H1 (cell line): ENCODE measurements at regions of chr16 and their contacts with region 1.

Region 1: DNA sequence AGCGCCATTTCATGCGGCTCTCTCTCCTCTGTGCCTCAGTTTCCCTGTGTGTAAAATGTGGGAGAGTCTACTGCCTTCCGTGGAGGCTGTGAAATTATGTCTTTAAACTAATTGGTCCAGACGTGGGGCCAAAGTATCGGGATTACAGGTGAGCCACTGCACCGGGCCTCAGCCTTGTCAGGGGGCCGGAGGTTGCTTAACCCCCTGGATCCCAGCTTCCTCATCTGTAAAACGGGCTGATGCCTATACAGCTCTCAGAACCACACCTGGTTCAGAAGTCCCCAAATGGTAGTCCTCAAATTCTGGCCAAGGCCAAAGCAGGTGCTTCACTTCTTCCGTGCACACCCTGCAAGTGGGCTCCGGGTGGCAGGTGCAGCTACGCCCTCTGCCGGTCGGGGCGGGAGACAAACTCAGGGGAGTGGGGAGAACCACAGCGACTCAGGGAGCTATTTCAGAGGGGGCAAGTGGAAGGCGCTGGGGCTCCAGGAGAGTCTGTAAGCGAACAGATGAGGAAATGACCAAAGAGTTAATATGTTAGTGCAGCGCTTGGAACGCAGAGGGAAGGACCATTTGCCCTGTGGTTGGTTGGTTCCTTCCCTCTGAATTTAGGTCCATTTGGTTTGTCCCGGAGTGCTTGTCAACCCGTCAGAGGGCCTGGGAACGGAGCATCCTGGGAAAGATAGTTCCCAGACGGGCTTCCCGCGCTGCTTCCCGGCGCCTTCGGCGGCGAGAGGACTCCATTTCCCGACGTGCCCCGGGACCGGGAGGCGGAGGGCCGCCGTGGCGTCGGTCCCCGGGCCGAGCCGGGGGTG is at the start of gene MGRN1:
- DNase-seq: peak; percentile 82 to 94
- H3K4me3 ChIP-seq: peak within 1 kb of the TSS; percentile 72 to 97 (median 78)
- H3K27ac ChIP-seq: peak within 1 kb of the TSS; percentile 98
- H3K4me1 ChIP-seq: peaks cover 0 to 7% (median 6%) of the 10 kb centered on the region in 4 experiments; a peak in 6 of 7 replicates
- H3K27me3 ChIP-seq: no peaks in the 10 kb centered on the region
- CTCF ChIP-seq: peak; percentile 89 to 99 (median 98)
- EP300 ChIP-seq: peak in 1 of 2 experiments; percentile 97; a peak in 2 of 3 replicates
- POLR2A ChIP-seq: no peak; a peak in 1 of 3 replicates
- RAD21 ChIP-seq: peak; percentile 68 to 77
- total RNA-seq, gene MGRN1: 79.4 and 82.3 TPM in 2 replicates

Region 2: DNA sequence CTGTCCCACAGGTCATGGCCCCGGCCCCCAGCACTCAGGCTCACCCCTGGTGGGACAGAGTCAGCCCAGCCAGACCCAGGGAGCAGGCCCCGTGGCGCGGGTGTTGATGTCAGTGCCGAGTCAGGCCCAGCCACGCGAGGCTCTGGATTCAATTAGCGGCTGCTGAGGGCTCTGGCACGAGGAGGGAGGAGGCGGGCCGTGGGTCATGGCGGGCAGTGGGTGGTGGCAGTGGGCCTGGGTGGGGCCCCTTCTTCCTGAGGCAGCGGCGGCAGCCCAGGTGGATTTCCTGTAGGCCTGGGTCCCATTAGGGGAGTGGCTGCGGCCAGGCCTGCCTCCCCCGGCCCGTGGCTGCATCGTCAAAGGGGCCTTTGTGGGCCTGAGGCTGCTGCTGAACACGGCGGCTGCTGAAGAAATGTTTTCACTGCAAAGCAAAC is 239.7 kb before region 1 on chr16:
- CTCF ChIA-PET with region 1: no interaction called
- POLR2A ChIA-PET with region 1: no interaction called
- DNase-seq: no peak
- H3K4me3 ChIP-seq: no peak overlapping the region
- H3K27ac ChIP-seq: no peak overlapping the region
- H3K4me1 ChIP-seq: peaks cover 0 to 15% (median 11%) of the 10 kb centered on the region in 4 experiments; a peak in 6 of 7 replicates
- H3K27me3 ChIP-seq: no peaks in the 10 kb centered on the region
- CTCF ChIP-seq: no peak
- EP300 ChIP-seq: no peak
- POLR2A ChIP-seq: 0 out of 3 replicates have a peak, but pooled peaks of 1 of the 2 experiments have one; percentile 8
- RAD21 ChIP-seq: no peak

Region 3: DNA sequence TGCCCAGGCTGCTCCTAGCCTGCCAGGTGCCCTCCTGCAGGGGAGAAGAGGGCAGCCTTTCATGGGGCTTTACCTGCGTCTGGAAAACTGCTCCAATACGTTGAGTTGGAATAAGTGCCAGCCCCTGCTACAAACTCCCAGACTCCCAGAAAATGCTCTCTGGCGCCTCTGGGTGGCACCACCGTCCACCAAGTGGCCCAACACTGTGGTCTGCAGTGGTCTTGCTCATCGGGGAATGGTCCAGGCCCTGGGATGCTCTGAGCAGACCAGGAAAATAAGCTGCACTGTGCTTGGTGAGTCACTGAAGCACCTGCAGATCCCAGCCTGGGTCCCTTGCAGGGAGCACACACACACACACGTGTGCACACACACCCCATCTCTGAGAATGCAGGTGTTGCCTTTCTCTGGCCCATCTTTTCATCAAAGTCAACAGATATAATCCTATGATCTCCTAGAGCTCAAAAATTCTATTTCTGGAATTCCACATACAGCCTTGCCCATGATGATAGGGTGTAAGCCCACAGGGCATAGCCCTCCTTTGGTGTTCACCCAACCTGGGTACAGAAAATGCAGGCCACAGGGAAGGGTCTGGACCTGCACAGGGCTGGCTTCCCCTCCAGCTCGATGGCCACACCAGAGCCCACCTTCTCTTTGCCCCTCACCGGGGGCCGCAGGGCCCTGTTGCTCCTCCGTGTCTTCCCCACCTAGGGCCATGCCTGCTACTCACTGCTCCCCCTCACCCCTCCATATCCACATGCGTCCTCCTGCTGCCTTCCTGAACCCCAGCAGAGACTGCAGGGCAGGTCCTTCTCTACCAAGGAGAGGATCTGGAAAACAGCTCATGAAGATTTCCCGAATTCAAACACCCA is 106.2 kb before region 1 on chr16:
- CTCF ChIA-PET with region 1: interaction called, 22 read pairs
- POLR2A ChIA-PET with region 1: no interaction called
- DNase-seq: peak in 1 of 2 experiments; percentile 79
- H3K4me3 ChIP-seq: no peak overlapping the region
- H3K27ac ChIP-seq: no peak overlapping the region; the same call in 1 of the 2 replicates
- H3K4me1 ChIP-seq: peaks cover 0 to 18% (median 13%) of the 10 kb centered on the region in 4 experiments; a peak in 6 of 7 replicates
- H3K27me3 ChIP-seq: no peaks in the 10 kb centered on the region
- CTCF ChIP-seq: peak; percentile 91 to 97 (median 94)
- EP300 ChIP-seq: no peak
- POLR2A ChIP-seq: 0 out of 3 replicates have a peak, but pooled peaks of 1 of the 2 experiments have one; percentile 27
- RAD21 ChIP-seq: peak; percentile 98 to 99

Region 4: DNA sequence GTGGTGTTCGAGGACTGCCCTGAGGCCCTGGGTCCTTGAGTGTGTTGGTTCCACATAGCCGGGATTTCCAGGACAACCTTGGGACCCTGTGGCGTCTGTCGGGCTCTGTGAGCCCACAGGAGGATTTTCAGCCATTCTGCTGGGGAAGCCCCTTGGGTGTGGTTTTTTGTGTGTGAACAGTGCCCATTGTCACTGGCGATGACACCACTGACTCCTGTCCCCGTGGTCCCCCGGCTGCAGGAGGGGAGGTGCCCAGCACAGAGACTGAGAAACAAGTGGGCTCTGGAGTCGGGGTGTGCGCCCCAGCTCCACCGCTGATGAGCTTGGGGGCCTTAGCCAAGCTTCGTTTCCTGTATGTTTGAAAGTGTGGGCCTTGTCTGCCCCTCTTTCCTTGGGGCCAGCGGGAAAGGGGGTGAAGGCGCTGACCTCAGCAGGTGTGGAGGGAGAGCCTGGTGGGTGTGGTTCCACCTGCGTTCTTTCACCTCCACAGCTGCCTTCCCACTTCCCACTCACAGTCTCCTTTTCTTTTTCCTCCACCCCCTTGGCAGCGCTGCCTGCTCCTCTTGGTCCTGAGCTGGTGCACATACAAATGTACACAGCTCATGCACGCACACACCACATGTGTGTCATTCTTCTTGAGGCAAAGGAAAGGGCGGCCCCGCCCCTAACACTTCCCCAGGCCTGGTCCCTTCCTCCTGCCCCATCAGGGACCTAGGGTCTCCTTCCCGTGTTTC is 16.5 kb after region 1 on chr16:
- CTCF ChIA-PET with region 1: interaction called, 18 read pairs
- POLR2A ChIA-PET with region 1: interaction called, 6 read pairs
- DNase-seq: no peak
- H3K4me3 ChIP-seq: no peak overlapping the region
- H3K27ac ChIP-seq: no peak overlapping the region
- H3K4me1 ChIP-seq: no peaks in the 10 kb centered on the region
- H3K27me3 ChIP-seq: no peaks in the 10 kb centered on the region; a peak in 1 of 7 replicates
- CTCF ChIP-seq: no peak
- EP300 ChIP-seq: no peak
- POLR2A ChIP-seq: no peak
- RAD21 ChIP-seq: no peak

Region 5: GRCh38 chr16:4649744-4650442 is 25.7 kb after region 1 on chr16:
- CTCF ChIA-PET with region 1: interaction called, 10 read pairs
- POLR2A ChIA-PET with region 1: interaction called, 3 read pairs
- DNase-seq: peak in 1 of 2 experiments; percentile 41
- H3K4me3 ChIP-seq: no peak overlapping the region
- H3K27ac ChIP-seq: no peak overlapping the region
- H3K4me1 ChIP-seq: peaks cover 0 to 2% (median 0%) of the 10 kb centered on the region in 4 experiments; a peak in 2 of 7 replicates
- H3K27me3 ChIP-seq: no peaks in the 10 kb centered on the region
- CTCF ChIP-seq: no peak
- EP300 ChIP-seq: no peak
- POLR2A ChIP-seq: no peak
- RAD21 ChIP-seq: no peak

Region 6: GRCh38 chr16:4709481-4709880 is 85.3 kb after region 1 on chr16:
- CTCF ChIA-PET with region 1: no interaction called
- POLR2A ChIA-PET with region 1: no interaction called
- DNase-seq: no peak
- H3K4me3 ChIP-seq: no peak overlapping the region
- H3K27ac ChIP-seq: no peak overlapping the region
- H3K4me1 ChIP-seq: peaks cover 0 to 8% (median 4%) of the 10 kb centered on the region in 4 experiments; a peak in 5 of 7 replicates
- H3K27me3 ChIP-seq: no peaks in the 10 kb centered on the region
- CTCF ChIP-seq: no peak
- EP300 ChIP-seq: no peak
- POLR2A ChIP-seq: no peak
- RAD21 ChIP-seq: no peak